BJ (cell line): ENCODE measurements at regions of chr1 and their contacts with region 1.

Region 1: GRCh38 chr1:87292684-87293493 is 35.8 kb upstream of the LMO4 start:
- DNase-seq: no peak
- H3K4me3 ChIP-seq: no peak overlapping the region
- H3K27me3 ChIP-seq: peaks cover 4% of the 10 kb centered on the region; the same call in 1 of the 2 replicates
- CTCF ChIP-seq: peak; percentile 69

Region 2: DNA sequence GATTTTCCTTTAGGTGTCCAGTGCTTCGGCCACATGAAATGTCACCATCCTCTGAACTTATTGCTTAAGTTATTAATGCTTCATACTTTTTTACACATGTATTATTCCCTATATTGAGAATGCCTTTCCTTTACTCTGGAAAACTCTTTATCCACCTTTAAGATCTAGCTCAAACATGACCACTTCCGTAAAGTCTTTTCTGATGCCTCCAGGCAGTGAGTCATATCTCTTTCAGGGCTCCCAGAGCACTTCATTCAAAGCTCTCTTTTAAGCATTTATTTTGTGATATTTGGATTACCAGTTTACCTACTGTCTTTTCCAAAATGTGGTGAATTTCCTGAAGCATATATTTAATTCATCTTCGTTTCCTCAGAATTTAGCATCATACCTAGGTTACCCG is 199.6 kb before region 1 on chr1:
- CTCF ChIA-PET with region 1: no interaction called
- POLR2A ChIA-PET with region 1: no interaction called
- DNase-seq: no peak
- H3K4me3 ChIP-seq: no peak overlapping the region
- H3K27me3 ChIP-seq: no peaks in the 10 kb centered on the region
- CTCF ChIP-seq: no peak

Region 3: DNA sequence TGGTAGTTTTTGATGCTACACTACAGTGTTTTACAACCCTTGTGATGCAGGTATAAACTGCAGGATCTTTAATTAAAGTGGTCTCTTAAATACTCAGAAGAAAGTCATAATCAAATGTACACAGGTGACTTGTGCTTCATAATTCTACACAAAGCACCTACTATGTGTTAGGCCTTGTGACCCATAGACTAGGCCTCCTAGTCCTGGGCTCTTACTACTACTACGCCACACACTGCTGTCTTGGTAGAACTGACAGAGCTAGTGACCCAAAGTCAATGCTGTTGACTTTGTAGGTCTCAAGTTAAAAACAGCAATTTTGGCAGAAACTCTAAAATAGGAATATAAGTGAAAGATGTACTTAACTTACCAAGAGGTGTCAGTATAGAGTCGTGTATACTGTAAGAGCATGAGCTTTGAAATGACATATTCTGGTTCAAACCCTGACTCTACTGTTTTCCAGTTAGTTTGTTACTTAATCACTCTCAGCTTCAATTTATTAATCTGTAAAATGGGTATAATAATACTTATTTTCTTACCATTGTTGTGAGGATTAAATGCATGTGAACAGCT is 12.8 kb before region 1 on chr1:
- CTCF ChIA-PET with region 1: interaction called, 12 read pairs
- POLR2A ChIA-PET with region 1: no interaction called
- DNase-seq: no peak
- H3K4me3 ChIP-seq: no peak overlapping the region
- H3K27me3 ChIP-seq: no peaks in the 10 kb centered on the region
- CTCF ChIP-seq: no peak

Region 4: GRCh38 chr1:87305151-87305550 is 12.3 kb after region 1 on chr1:
- CTCF ChIA-PET with region 1: interaction called, 11 read pairs
- POLR2A ChIA-PET with region 1: no interaction called
- DNase-seq: no peak
- H3K4me3 ChIP-seq: no peak overlapping the region
- H3K27me3 ChIP-seq: peaks cover 6% of the 10 kb centered on the region
- CTCF ChIP-seq: no peak

Region 5: GRCh38 chr1:87435484-87435883 is 142.6 kb after region 1 on chr1:
- CTCF ChIA-PET with region 1: no interaction called
- POLR2A ChIA-PET with region 1: no interaction called
- DNase-seq: no peak
- H3K4me3 ChIP-seq: no peak overlapping the region
- H3K27me3 ChIP-seq: peaks cover 2% of the 10 kb centered on the region; the same call in 1 of the 2 replicates
- CTCF ChIP-seq: no peak

Region 6: GRCh38 chr1:87501738-87502137 is 208.8 kb after region 1 on chr1:
- CTCF ChIA-PET with region 1: no interaction called
- POLR2A ChIA-PET with region 1: no interaction called
- DNase-seq: no peak
- H3K4me3 ChIP-seq: no peak overlapping the region
- H3K27me3 ChIP-seq: no peaks in the 10 kb centered on the region
- CTCF ChIP-seq: peak; percentile 19; the same call in 1 of the 2 replicates